PC-3 (cell line): ENCODE measurements at regions of chr4 and their contacts with region 1.

Region 1: DNA sequence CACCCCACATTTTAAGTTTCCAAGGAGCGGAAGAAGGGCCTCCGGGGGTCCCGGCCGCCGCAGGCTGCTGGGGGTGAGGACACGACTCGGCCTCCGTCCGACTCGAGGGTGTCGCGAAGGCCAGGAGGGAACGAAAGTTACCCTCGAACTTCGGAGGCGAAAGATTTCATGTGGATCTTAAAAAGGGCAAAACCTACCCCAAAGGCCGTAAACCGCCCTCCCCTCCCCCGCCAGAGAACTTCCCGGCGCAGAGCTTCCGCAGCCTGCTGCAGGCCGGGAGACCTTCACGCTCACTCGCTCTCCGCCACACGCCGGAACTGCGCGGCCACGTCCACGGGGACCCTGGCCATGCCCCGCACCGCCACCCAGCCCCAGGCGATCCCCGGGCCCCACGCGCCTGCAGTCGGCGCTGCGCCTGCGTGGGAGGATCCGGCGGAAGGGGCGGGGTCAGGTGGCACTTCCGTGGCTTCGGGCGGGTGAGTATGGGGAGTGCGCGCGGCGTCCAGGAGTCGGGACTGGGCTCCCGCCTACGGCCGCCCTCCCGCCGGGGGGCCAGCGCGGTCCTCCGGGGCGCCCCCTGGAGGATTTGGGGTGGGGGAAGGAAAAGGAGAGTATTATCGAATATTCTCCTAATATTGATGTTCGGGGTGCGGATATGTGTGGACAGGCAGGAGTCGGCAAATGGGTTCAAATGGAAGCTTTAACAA is at the start of gene MMAA:
- DNase-seq: peak; percentile 95
- ATAC-seq: peak; percentile 91
- H3K4me3 ChIP-seq: peak within 1 kb of the TSS; percentile 91
- H3K27ac ChIP-seq: peak within 1 kb of the TSS; percentile 69
- H3K4me1 ChIP-seq: peaks cover 23% of the 10 kb centered on the region
- H3K27me3 ChIP-seq: no peaks in the 10 kb centered on the region
- CTCF ChIP-seq: peak; percentile 83
- total RNA-seq, gene MMAA: 2.6 and 5.3 TPM in 2 replicates

Region 2: GRCh38 chr4:145154573-145154972 is 464.5 kb before region 1 on chr4:
- CTCF ChIA-PET with region 1: no interaction called
- POLR2A ChIA-PET with region 1: no interaction called
- intact Hi-C with region 1: loop called (anchors 10 kb)
- DNase-seq: peak; percentile 47
- ATAC-seq: peak; percentile 75
- H3K4me3 ChIP-seq: no peak overlapping the region
- H3K27ac ChIP-seq: no peak overlapping the region
- H3K4me1 ChIP-seq: no peaks in the 10 kb centered on the region
- H3K27me3 ChIP-seq: no peaks in the 10 kb centered on the region
- CTCF ChIP-seq: peak; percentile 75

Region 3: DNA sequence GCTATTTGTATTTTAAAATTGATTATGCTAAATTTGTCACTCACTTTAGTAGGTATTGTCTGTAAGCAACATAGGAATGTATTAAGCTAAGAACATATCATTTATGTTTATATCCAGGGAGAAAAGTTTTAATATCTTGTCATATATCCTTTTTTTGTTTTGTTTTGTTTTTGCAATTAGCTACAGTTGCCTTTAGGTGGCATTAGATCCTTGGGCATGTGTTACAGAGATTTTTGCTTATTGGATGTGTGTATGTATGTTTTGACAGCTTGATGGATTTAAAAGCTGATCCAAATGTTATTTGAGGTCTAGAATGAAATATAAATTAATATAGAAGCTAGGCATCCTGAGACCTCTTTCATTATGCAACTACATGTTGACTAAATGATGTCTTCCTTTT is 402.6 kb before region 1 on chr4:
- CTCF ChIA-PET with region 1: interaction called, 11 read pairs
- POLR2A ChIA-PET with region 1: no interaction called
- intact Hi-C with region 1: loop called (anchors 1 kb)
- DNase-seq: peak; percentile 61
- ATAC-seq: no peak
- H3K4me3 ChIP-seq: no peak overlapping the region
- H3K27ac ChIP-seq: no peak overlapping the region
- H3K4me1 ChIP-seq: no peaks in the 10 kb centered on the region
- H3K27me3 ChIP-seq: peaks cover 3% of the 10 kb centered on the region; the same call in 1 of the 2 replicates
- CTCF ChIP-seq: peak; percentile 89

Region 4: DNA sequence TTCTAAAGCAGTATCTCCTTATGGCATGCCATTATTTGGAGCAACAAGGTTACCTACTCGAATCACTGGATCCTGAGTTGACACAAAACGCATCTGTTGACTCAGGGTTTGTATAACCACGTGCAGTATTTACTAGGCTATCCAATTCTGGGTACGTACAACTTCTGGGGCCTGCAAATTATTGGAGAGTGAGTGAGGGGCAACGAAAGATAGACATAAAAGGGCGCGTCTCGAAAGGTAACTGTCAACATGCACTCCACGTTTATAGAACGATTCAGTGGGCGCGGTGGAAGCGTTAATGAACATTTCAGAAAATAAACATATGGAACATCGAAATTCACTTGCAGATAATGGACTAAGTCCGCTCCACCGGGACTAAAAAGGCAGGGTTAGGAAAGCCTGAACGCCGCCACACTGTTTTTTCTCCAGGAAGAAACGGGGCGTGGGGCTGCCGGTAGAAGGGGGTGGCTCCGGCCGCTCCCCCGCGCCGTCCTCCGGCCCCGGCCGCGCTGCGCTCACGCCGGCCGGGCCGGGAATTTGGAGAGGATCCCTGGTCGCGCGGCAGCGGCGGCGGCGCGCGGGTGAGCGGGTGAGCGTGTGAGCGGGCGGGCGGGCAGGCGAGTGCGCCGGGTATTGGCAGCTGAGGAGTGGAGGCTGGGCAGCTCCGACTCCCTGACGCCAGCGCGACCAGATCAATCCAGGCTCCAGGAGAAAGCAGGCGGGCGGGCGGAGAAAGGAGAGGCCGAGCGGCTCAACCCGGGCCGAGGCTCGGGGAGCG is 137.7 kb before region 1 on chr4 and contains the start of gene SMAD1:
- CTCF ChIA-PET with region 1: no interaction called
- POLR2A ChIA-PET with region 1: no interaction called
- intact Hi-C with region 1: loop called (anchors 5 kb)
- DNase-seq: peak; percentile 81
- ATAC-seq: peak; percentile 83
- H3K4me3 ChIP-seq: peak within 1 kb of the TSS; percentile 83
- H3K27ac ChIP-seq: peak within 1 kb of the TSS; percentile 26; the same call in 1 of the 2 replicates
- H3K4me1 ChIP-seq: peaks cover 23% of the 10 kb centered on the region; the same call in 1 of the 2 replicates
- H3K27me3 ChIP-seq: no peaks in the 10 kb centered on the region
- CTCF ChIP-seq: no peak
- total RNA-seq, gene SMAD1: 13.3 and 14.8 TPM in 2 replicates

Region 5: DNA sequence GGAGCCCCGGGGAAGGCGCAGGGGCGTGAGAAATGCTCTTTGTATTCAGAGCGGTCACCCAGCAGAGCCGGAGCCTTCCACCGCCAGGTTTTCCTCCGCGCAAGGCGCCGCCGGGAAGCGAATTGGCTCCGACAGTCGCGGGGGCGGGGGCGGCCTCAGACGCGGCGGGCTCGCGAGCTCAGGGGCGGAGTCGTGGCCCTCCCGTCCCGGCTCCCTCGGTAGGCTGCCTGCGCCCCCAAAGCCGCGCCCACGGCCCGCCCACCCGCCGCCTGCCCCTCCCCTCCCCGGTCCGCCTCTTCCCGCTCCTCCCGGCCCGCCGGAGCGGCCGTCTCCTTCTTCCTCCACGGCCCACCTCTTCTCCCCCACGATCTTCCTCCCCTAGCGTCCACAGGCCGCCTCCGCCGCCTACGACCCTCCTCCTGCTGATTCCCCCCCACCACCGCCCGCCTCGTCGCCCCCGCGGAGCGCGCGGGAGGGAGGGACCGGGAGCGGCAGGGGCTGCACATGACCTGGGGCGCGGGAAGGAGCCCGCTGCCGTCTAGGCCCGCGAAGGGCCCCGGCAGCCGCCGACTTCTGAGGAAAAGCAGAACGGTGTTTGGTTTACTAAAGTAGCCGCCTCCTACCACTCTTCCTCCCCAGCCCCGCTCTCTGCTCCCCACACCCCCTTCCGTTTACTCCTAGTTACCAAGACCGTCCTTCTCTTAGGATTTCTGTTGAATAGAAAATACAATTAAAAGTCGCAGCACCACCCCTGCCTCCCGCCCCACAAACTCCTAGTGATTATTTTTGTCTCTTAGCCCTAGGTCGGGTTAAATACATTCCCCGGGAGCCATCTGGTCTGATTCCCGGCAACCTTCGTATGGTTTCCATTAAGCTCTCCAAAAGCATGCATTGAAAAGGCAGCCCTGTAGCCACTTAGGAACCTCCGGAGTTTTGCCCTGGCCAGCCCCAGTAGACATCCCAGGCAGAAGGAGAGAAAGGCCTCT is 114.1 kb after region 1 on chr4:
- CTCF ChIA-PET with region 1: no interaction called
- POLR2A ChIA-PET with region 1: interaction called, 4 read pairs
- intact Hi-C with region 1: loop called (anchors 1 kb)
- DNase-seq: peak; percentile 95
- ATAC-seq: peak; percentile 65
- H3K4me3 ChIP-seq: peak overlapping the region; percentile 68
- H3K27ac ChIP-seq: peak overlapping the region; percentile 94
- H3K4me1 ChIP-seq: peaks cover 51% of the 10 kb centered on the region
- H3K27me3 ChIP-seq: no peaks in the 10 kb centered on the region
- CTCF ChIP-seq: no peak

Region 6: GRCh38 chr4:145808021-145808650 is 189.1 kb after region 1 on chr4:
- CTCF ChIA-PET with region 1: no interaction called
- POLR2A ChIA-PET with region 1: no interaction called
- intact Hi-C with region 1: loop called (anchors 2 kb)
- DNase-seq: peak; percentile 98
- ATAC-seq: peak; percentile 68
- H3K4me3 ChIP-seq: peak overlapping the region; percentile 30; the same call in 1 of the 2 replicates
- H3K27ac ChIP-seq: peak overlapping the region; percentile 92
- H3K4me1 ChIP-seq: peaks cover 48% of the 10 kb centered on the region
- H3K27me3 ChIP-seq: no peaks in the 10 kb centered on the region
- CTCF ChIP-seq: no peak

Region 7: DNA sequence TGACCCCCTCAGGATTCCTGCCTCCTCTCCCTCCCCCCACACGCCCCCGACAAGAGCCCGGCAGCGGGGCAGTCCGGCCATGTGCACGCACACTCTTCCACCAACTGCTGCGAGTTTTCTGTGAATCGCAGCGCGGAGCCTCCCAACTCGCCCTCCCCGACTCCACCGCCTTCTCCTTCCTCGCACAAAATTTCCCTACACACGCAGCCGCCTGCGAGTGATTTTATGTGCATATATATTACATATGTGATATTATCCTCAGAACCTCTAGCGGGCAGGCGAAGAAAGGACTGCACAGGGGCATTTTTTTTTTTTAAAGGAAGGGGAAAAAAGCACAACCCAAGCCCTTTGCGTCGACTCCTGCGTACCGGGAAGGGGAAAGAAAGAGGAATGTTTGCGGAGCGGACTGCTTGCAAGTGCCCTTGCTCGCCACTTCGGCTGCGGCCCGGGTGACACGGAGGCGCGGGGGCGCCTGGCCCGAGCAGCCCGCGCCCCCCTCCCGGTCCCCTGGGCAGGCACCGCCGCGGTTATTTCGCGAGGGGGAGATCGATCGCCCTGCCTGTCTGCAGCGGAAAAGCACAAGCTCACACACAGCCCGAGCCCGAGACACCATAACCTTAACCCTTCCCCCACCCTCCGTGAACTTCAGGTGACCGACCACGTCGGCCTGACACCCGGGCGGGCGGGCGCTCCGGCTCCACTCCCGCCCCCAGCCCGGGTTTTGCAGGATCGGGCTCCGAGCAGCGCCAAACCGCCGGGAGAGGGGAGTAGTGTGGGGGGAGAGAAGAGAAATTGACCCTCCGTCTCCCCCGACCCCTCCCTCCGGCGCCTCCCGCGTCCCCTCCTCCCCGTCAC is 317.3 kb after region 1 on chr4:
- CTCF ChIA-PET with region 1: no interaction called
- POLR2A ChIA-PET with region 1: no interaction called
- intact Hi-C with region 1: loop called (anchors 1 kb)
- DNase-seq: peak; percentile 75
- ATAC-seq: peak; percentile 37
- H3K4me3 ChIP-seq: peak overlapping the region; percentile 84
- H3K27ac ChIP-seq: peak overlapping the region; percentile 75
- H3K4me1 ChIP-seq: peaks cover 31% of the 10 kb centered on the region
- H3K27me3 ChIP-seq: no peaks in the 10 kb centered on the region
- CTCF ChIP-seq: peak; percentile 47; the same call in 1 of the 2 replicates

Region 8: GRCh38 chr4:146260521-146260920 is 641.4 kb after region 1 on chr4:
- CTCF ChIA-PET with region 1: no interaction called
- POLR2A ChIA-PET with region 1: no interaction called
- intact Hi-C with region 1: no loop called
- DNase-seq: peak; percentile 63
- ATAC-seq: peak; percentile 38; the same call in 1 of the 2 replicates
- H3K4me3 ChIP-seq: no peak overlapping the region
- H3K27ac ChIP-seq: no peak overlapping the region
- H3K4me1 ChIP-seq: peaks cover 7% of the 10 kb centered on the region; the same call in 1 of the 2 replicates
- H3K27me3 ChIP-seq: no peaks in the 10 kb centered on the region
- CTCF ChIP-seq: no peak